ENCODE measurements at regions of chr1 and their contacts with region 1.

Region 1: GRCh38 chr1:116817582-116818064 is 63.4 kb downstream of the CD2 start:
- DNase-seq: peak; percentile 83
- ATAC-seq: peak; percentile 75
- H3K4me3 Mint-ChIP-seq: peak overlapping the region; percentile 44
- H3K27ac Mint-ChIP-seq: peak overlapping the region; percentile 73
- H3K4me1 Mint-ChIP-seq: peaks cover 61% of the 10 kb centered on the region
- H3K27me3 Mint-ChIP-seq: no peaks in the 10 kb centered on the region

Region 2: GRCh38 chr1:116754198-116754977 is 63.2 kb before region 1 on chr1 and contains the start of gene CD2:
- CTCF ChIA-PET with region 1: interaction called, 13 read pairs
- POLR2A ChIA-PET with region 1: interaction called, 14 read pairs
- DNase-seq: peak; percentile 79
- ATAC-seq: peak; percentile 75
- H3K4me3 Mint-ChIP-seq: peak within 1 kb of the TSS; percentile 99
- H3K27ac Mint-ChIP-seq: peak within 1 kb of the TSS; percentile 98
- H3K4me1 Mint-ChIP-seq: peaks cover 42% of the 10 kb centered on the region
- H3K27me3 Mint-ChIP-seq: no peaks in the 10 kb centered on the region
- total RNA-seq, gene CD2: 186 to 189 TPM

Region 3: GRCh38 chr1:116794804-116795481 is 22.7 kb before region 1 on chr1:
- CTCF ChIA-PET with region 1: interaction called, 79 read pairs
- POLR2A ChIA-PET with region 1: no interaction called
- DNase-seq: no peak
- ATAC-seq: no peak
- H3K4me3 Mint-ChIP-seq: no peak overlapping the region
- H3K27ac Mint-ChIP-seq: no peak overlapping the region
- H3K4me1 Mint-ChIP-seq: peaks cover 73% of the 10 kb centered on the region
- H3K27me3 Mint-ChIP-seq: no peaks in the 10 kb centered on the region

Region 4: GRCh38 chr1:116806245-116806644 is 11.4 kb before region 1 on chr1:
- CTCF ChIA-PET with region 1: interaction called, 79 read pairs
- POLR2A ChIA-PET with region 1: interaction called, 8 read pairs
- DNase-seq: peak; percentile 56
- ATAC-seq: peak; percentile 35
- H3K4me3 Mint-ChIP-seq: peak overlapping the region; percentile 58
- H3K27ac Mint-ChIP-seq: peak overlapping the region; percentile 92
- H3K4me1 Mint-ChIP-seq: peaks cover 91% of the 10 kb centered on the region
- H3K27me3 Mint-ChIP-seq: no peaks in the 10 kb centered on the region

Region 5: GRCh38 chr1:116881879-116882520 is 64.4 kb after region 1 on chr1:
- CTCF ChIA-PET with region 1: interaction called, 12 read pairs
- POLR2A ChIA-PET with region 1: interaction called, 3 read pairs
- DNase-seq: peak; percentile 65
- ATAC-seq: peak; percentile 35
- H3K4me3 Mint-ChIP-seq: no peak overlapping the region
- H3K27ac Mint-ChIP-seq: no peak overlapping the region
- H3K4me1 Mint-ChIP-seq: peaks cover 9% of the 10 kb centered on the region
- H3K27me3 Mint-ChIP-seq: no peaks in the 10 kb centered on the region

Region 6: GRCh38 chr1:117392771-117393170 is 575.1 kb after region 1 on chr1:
- CTCF ChIA-PET with region 1: no interaction called
- POLR2A ChIA-PET with region 1: no interaction called
- DNase-seq: no peak
- ATAC-seq: no peak
- H3K4me3 Mint-ChIP-seq: no peak overlapping the region
- H3K27ac Mint-ChIP-seq: no peak overlapping the region
- H3K4me1 Mint-ChIP-seq: peaks cover 16% of the 10 kb centered on the region
- H3K27me3 Mint-ChIP-seq: no peaks in the 10 kb centered on the region